Activated CD8-positive, alpha-beta memory T cell treated with anti-CD3 and anti-CD28 coated beads, Interleukin-2, amount 10 ng/mL, durations not matched to agents 7 days and 5 days (primary cell): ENCODE measurements at regions of chr13 and their contacts with region 1.

Region 1: DNA sequence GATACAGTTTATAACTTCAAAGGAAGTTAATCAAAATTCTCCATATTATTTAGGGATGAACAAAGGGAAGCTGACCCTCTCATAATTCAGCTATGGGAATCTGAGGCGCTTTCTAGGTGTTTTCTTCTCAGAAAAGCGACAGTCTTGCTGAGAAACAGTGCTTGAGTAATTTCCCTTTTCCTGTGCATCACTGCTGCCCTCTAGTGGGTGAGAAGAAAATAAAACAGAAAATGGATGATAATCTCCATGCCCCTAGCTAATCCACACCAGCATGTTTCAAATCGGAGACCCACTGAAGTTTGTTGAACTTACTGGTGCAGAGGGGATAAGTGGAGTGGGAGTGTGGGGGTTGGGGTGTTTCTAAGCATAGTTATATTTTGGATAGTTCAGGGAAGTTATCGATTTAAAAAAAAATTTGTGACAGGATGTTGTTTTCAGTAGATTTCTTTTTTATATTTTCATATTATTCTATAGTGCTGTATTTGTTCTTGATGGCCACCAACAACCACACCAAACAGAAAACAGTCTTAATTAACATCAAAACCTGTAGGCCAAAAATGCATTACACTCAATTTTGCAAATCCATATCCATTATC is 21.4 kb downstream of the LCP1 start:
- DNase-seq: no peak
- ATAC-seq: peak; percentile 64
- H3K4me3 Mint-ChIP-seq: peak overlapping the region; percentile 61
- H3K27ac Mint-ChIP-seq: peak overlapping the region; percentile 91
- H3K4me1 Mint-ChIP-seq: peaks cover 64% of the 10 kb centered on the region
- H3K27me3 Mint-ChIP-seq: no peaks in the 10 kb centered on the region

Region 2: DNA sequence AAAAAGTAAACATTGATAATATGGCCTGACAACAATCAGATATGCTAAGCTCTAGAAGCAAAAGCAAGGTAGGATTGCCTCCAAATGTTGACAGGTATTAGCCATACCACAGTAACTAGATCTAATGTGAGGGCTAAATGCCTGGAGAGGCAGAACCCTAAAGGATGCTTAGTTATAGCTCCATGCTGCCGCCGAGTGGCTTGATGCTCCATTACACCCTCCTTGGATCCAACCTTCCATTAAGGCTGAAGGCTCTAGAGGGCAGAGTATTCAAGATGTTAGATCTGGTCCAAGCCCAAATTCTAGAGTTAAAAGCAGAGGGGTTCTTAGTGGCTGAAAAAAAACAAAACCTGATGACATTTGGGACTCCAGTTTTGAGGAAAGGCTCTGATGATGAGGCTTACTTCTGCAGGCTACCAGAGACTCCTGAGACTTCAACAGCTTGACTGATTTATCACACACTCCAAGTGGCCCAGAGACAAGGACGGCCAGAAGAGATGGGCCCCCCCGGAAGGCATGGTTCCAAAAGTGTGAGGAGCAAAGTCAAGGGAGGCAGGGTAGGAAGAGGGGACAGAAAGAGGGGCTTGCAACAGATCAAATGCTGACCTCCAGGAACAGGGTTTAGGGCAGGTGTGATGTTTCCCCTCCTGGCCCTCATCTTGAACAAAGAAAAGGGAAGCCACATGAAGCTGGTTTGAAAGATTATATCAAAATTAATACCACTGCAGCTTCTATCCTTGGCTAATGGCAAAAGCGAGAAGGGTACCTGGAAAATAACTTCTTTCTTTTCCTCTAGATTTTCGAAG is 33.8 kb before region 1 on chr13:
- CTCF ChIA-PET with region 1: interaction called, 14 read pairs
- DNase-seq: peak; percentile 76
- ATAC-seq: peak; percentile 84
- H3K4me3 Mint-ChIP-seq: no peak overlapping the region
- H3K27ac Mint-ChIP-seq: peak overlapping the region; percentile 5
- H3K4me1 Mint-ChIP-seq: peaks cover 26% of the 10 kb centered on the region
- H3K27me3 Mint-ChIP-seq: no peaks in the 10 kb centered on the region

Region 3: GRCh38 chr13:46143184-46143701 is 17.3 kb before region 1 on chr13:
- CTCF ChIA-PET with region 1: interaction called, 17 read pairs
- DNase-seq: no peak
- ATAC-seq: no peak
- H3K4me3 Mint-ChIP-seq: no peak overlapping the region
- H3K27ac Mint-ChIP-seq: no peak overlapping the region
- H3K4me1 Mint-ChIP-seq: peaks cover 26% of the 10 kb centered on the region
- H3K27me3 Mint-ChIP-seq: no peaks in the 10 kb centered on the region

Region 4: GRCh38 chr13:46149272-46150133 is 11.1 kb before region 1 on chr13:
- CTCF ChIA-PET with region 1: interaction called, 17 read pairs
- DNase-seq: no peak
- ATAC-seq: no peak
- H3K4me3 Mint-ChIP-seq: no peak overlapping the region
- H3K27ac Mint-ChIP-seq: peak overlapping the region; percentile 20
- H3K4me1 Mint-ChIP-seq: peaks cover 36% of the 10 kb centered on the region
- H3K27me3 Mint-ChIP-seq: no peaks in the 10 kb centered on the region

Region 5: GRCh38 chr13:46176756-46177155 is 16.2 kb after region 1 on chr13:
- CTCF ChIA-PET with region 1: interaction called, 56 read pairs
- DNase-seq: no peak
- ATAC-seq: no peak
- H3K4me3 Mint-ChIP-seq: peak overlapping the region; percentile 96
- H3K27ac Mint-ChIP-seq: peak overlapping the region; percentile 77
- H3K4me1 Mint-ChIP-seq: peaks cover 56% of the 10 kb centered on the region
- H3K27me3 Mint-ChIP-seq: no peaks in the 10 kb centered on the region

Region 6: GRCh38 chr13:46184277-46184699 is 23.7 kb after region 1 on chr13:
- CTCF ChIA-PET with region 1: interaction called, 11 read pairs
- DNase-seq: peak; percentile 89
- ATAC-seq: peak; percentile 70
- H3K4me3 Mint-ChIP-seq: peak overlapping the region; percentile 96
- H3K27ac Mint-ChIP-seq: peak overlapping the region; percentile 99
- H3K4me1 Mint-ChIP-seq: peaks cover 30% of the 10 kb centered on the region
- H3K27me3 Mint-ChIP-seq: no peaks in the 10 kb centered on the region

Region 7: DNA sequence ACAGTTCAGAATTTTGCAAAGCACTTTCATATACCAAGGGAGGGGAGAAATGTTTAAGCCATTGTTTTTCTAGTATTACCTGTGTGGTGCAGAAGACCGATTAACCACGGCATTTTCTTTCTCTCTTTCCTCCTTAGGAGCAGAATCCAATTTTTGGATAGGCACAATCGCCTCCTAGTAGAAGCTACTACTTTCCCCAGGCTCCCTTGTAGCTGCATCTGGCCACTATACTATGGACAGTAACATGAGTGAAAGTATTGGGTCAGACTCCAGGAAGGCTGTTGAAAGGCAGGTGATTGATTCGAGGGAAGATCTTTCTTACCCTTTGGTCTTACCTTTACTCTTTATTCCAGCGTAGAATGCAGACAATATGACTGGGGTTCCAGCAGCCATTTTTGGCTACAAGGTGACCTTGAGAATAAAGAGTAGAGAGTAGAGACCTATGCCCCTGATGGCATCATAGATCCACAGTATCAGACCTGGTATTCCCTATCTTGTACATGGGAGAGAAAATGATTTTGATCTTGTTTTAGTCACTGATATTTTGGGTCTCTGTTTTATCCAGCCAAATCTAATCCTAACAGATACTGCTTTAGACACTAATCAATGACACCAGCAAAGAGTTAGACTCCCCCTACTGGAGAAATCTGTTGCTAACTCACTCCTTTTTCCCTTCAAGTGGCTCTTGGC is 128.1 kb after region 1 on chr13:
- CTCF ChIA-PET with region 1: interaction called, 13 read pairs
- DNase-seq: no peak
- ATAC-seq: peak; percentile 87
- H3K4me3 Mint-ChIP-seq: no peak overlapping the region
- H3K27ac Mint-ChIP-seq: peak overlapping the region; percentile 34
- H3K4me1 Mint-ChIP-seq: peaks cover 15% of the 10 kb centered on the region
- H3K27me3 Mint-ChIP-seq: no peaks in the 10 kb centered on the region